ENCODE measurements at regions of chr11 and their contacts with region 1.

Region 1: GRCh38 chr11:94504689-94505293 is 7.5 kb upstream of the C11orf97 start:
- DNase-seq: no peak
- ATAC-seq: peak; percentile 84
- H3K4me3 ChIP-seq: no peak overlapping the region
- H3K27ac ChIP-seq: no peak overlapping the region
- H3K4me1 ChIP-seq: no peaks in the 10 kb centered on the region
- H3K27me3 ChIP-seq: no peaks in the 10 kb centered on the region
- CTCF ChIP-seq: peak; percentile 49 to 69 (median 55); a peak in 5 of 6 replicates
- EP300 ChIP-seq: no peak
- POLR2A ChIP-seq: no peak
- RAD21 ChIP-seq: peak; percentile 85

Region 2: DNA sequence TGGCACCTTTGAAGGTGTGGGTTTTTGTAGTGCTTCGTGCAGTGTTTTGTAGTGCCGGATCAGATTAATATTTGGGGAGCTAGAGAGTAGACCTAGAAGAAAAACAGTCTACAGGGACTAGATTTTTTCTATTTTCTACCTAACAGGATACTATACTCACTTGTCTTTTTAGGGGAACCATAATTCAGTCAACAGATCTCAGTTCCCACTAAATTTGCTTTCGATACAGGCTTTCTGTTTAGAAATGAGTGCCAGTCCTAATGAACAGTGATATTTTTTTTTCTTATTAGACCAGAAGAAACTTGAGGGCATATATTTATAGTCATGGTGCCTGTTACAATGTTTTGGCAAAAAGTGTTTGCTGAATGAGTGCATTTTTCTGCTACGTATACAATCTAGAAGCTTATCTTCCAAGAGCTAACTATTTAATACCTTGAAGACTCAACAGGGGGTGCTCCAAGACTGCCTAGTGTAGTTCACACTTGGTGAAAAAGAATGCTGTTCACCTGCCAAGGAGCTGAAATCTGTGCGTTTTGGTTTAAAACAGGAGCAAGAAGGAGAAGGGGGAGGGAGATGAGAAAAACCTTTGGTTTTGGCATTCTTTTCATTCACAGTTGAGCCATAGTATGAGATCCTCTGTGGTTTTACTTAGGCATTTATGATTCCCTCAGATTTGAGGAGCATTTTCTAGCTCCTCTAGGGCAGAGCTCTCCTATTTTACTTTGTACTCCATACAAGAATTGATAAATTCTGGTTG is 609.5 kb before region 1 on chr11:
- CTCF ChIA-PET with region 1: interaction called, 13 read pairs
- POLR2A ChIA-PET with region 1: no interaction called
- RAD21 ChIA-PET with region 1: interaction called, 11 read pairs
- SMC1A ChIA-PET with region 1: interaction called, 6 read pairs
- in situ Hi-C with region 1: loop called (anchors 10 kb)
- intact Hi-C with region 1: loop called (anchors 2 kb)
- DNase-seq: no peak
- ATAC-seq: peak; percentile 82
- H3K4me3 ChIP-seq: no peak overlapping the region
- H3K27ac ChIP-seq: no peak overlapping the region
- H3K4me1 ChIP-seq: no peaks in the 10 kb centered on the region
- H3K27me3 ChIP-seq: no peaks in the 10 kb centered on the region
- CTCF ChIP-seq: peak; percentile 51 to 58 (median 56)
- EP300 ChIP-seq: no peak
- POLR2A ChIP-seq: no peak
- RAD21 ChIP-seq: peak; percentile 76

Region 3: GRCh38 chr11:94171693-94172440 is 332.9 kb before region 1 on chr11:
- CTCF ChIA-PET with region 1: interaction called, 16 read pairs
- POLR2A ChIA-PET with region 1: interaction called, 5 read pairs
- RAD21 ChIA-PET with region 1: interaction called, 7 read pairs
- SMC1A ChIA-PET with region 1: interaction called, 5 read pairs
- in situ Hi-C with region 1: loop called (anchors 5 kb)
- intact Hi-C with region 1: no loop called
- DNase-seq: no peak
- ATAC-seq: peak; percentile 91
- H3K4me3 ChIP-seq: no peak overlapping the region
- H3K27ac ChIP-seq: no peak overlapping the region
- H3K4me1 ChIP-seq: no peaks in the 10 kb centered on the region
- H3K27me3 ChIP-seq: no peaks in the 10 kb centered on the region
- CTCF ChIP-seq: peak; percentile 62 to 84 (median 79)
- EP300 ChIP-seq: no peak
- POLR2A ChIP-seq: no peak
- RAD21 ChIP-seq: peak; percentile 75

Region 4: GRCh38 chr11:94325681-94326080 is 179.1 kb before region 1 on chr11:
- CTCF ChIA-PET with region 1: interaction called, 88 read pairs
- POLR2A ChIA-PET with region 1: no interaction called
- RAD21 ChIA-PET with region 1: interaction called, 20 read pairs
- SMC1A ChIA-PET with region 1: interaction called, 31 read pairs
- in situ Hi-C with region 1: loop called (anchors 5 kb)
- intact Hi-C with region 1: loop called (anchors 1 kb)
- DNase-seq: peak; percentile 9
- ATAC-seq: peak; percentile 95
- H3K4me3 ChIP-seq: no peak overlapping the region
- H3K27ac ChIP-seq: no peak overlapping the region
- H3K4me1 ChIP-seq: no peaks in the 10 kb centered on the region
- H3K27me3 ChIP-seq: no peaks in the 10 kb centered on the region
- CTCF ChIP-seq: peak; percentile 76 to 83 (median 81)
- EP300 ChIP-seq: no peak
- POLR2A ChIP-seq: no peak
- RAD21 ChIP-seq: peak; percentile 86

Region 5: DNA sequence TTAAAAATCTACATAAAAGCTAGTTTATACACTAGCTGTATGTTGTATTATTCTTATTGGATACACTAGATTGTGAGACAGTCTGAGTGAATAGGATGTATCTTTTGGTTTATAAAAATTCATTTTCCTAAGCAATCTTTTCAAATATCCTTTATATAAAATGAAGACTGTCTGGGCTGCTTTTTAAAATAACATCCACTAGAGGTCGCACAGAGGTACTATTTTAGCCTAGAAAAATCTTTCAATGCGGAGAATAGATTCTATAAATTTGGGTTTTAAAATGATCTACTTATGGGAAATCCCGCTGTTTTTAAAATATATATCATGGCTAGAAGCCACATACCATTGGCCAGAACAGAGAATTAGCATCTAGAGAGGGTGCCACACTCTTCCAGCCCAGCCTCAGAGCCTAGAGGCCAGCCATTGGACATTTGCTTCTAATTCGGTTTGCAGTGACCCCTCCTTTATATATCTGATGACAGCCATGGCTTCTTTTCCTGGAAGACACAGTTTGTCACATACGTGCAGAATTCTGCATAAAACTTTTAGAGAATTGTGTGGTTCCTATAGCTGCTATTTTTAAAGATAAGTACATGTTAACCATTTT is 14.8 kb after region 1 on chr11:
- CTCF ChIA-PET with region 1: interaction called, 26 read pairs
- POLR2A ChIA-PET with region 1: interaction called, 5 read pairs
- RAD21 ChIA-PET with region 1: interaction called, 10 read pairs
- SMC1A ChIA-PET with region 1: interaction called, 8 read pairs
- in situ Hi-C with region 1: no loop called
- intact Hi-C with region 1: no loop called
- DNase-seq: no peak
- ATAC-seq: peak; percentile 78
- H3K4me3 ChIP-seq: no peak overlapping the region
- H3K27ac ChIP-seq: no peak overlapping the region
- H3K4me1 ChIP-seq: no peaks in the 10 kb centered on the region; the same call in 1 of the 2 replicates
- H3K27me3 ChIP-seq: no peaks in the 10 kb centered on the region
- CTCF ChIP-seq: peak; percentile 37 to 47 (median 40); a peak in 5 of 6 replicates
- EP300 ChIP-seq: no peak
- POLR2A ChIP-seq: no peak
- RAD21 ChIP-seq: peak; percentile 73

Region 6: GRCh38 chr11:94719876-94720275 is 215.1 kb after region 1 on chr11:
- CTCF ChIA-PET with region 1: no interaction called
- POLR2A ChIA-PET with region 1: no interaction called
- RAD21 ChIA-PET with region 1: no interaction called
- SMC1A ChIA-PET with region 1: no interaction called
- in situ Hi-C with region 1: no loop called
- intact Hi-C with region 1: no loop called
- DNase-seq: no peak
- ATAC-seq: no peak
- H3K4me3 ChIP-seq: no peak overlapping the region
- H3K27ac ChIP-seq: no peak overlapping the region
- H3K4me1 ChIP-seq: no peaks in the 10 kb centered on the region
- H3K27me3 ChIP-seq: peaks cover 0 to 3% of the 10 kb centered on the region in 2 experiments; a peak in 1 of 4 replicates
- CTCF ChIP-seq: no peak
- EP300 ChIP-seq: no peak
- POLR2A ChIP-seq: no peak
- RAD21 ChIP-seq: no peak

Measured in GM12878 (cell line).